ENCODE measurements at regions of chr13 and their contacts with region 1.

Region 1: DNA sequence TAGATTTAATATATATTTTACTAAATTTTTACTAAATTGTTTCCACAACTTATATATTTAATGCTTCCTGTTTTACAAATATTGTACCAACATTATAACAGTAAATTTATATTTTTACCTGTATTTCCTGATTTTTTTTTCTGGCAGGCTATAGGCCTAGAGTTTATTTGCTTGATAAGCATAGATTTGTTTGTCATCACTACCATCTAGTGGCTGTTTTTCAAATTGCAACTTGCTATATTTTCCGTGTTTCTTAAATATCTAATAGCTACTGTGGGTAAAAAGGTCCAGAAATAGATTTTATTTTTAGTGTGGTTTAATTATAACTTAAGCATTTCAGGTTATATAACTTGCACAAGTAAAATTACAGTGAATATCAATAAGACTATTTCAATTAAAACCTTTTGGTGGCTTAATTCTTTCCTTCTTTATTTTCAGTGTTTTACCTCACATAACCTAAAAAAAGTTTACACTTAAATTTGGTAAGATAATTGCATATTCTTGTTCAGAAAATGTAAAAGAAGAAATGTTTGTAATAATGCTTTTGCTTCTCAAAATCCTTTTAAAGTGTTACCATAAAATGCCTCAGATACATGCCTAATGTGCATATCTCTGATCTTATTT is 60.6 kb downstream of the NDFIP2 start:
- DNase-seq: peak in 7 of 9 donors; percentile 36 to 70 (median 59)
- ATAC-seq: peak; percentile 74
- H3K4me3 ChIP-seq: no peak overlapping the region
- H3K4me3 Mint-ChIP-seq: no peak overlapping the region
- H3K27ac ChIP-seq: no peak overlapping the region
- H3K27ac Mint-ChIP-seq: no peak overlapping the region
- H3K4me1 ChIP-seq: no peaks in the 10 kb centered on the region
- H3K4me1 Mint-ChIP-seq: peaks cover 0 to 20% (median 0%) of the 10 kb centered on the region in 7 donors
- H3K27me3 ChIP-seq: no peaks in the 10 kb centered on the region
- H3K27me3 Mint-ChIP-seq: no peaks in the 10 kb centered on the region

Region 2: DNA sequence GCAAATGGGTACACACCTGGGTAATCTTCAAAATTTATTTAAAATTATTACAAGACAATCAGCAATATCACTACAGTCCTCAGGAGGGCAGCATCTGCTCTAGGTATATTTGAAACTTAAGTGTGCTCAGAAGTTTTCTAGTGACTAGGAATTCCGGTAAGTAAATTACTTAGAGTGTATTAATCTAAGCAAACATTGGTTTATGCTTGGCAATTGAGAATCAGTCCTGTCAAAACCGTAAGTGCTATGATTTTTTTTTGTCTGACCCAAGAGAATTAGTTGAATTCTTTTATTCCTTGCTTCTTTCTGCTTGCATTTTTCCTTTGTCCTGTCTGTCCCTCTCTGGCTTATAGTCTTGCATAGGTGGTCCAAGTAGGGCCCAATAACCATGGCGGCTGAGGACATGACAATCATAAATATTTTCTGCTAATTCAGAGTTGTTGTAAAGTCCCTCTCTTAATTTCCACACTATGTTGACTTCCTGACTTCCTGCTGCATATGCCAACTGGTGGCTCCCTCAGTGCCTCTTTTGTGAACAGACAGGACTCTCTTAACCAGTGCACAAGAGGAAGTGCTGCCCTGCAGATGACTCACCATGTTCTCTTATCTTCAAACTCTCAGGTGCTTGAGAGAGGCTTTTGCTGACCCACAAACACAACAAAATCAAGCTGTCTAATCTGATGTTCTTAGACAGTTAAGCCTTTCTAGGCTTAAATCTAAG is 1761.8 kb before region 1 on chr13:
- CTCF ChIA-PET with region 1: no interaction called
- POLR2A ChIA-PET with region 1: no interaction called
- intact Hi-C with region 1: loop called in 1 of 2 experiments (anchors 5 kb)
- DNase-seq: peak in 5 of 9 donors; percentile 23 to 41 (median 25)
- ATAC-seq: peak; percentile 81
- H3K4me3 ChIP-seq: no peak overlapping the region
- H3K4me3 Mint-ChIP-seq: no peak overlapping the region
- H3K27ac ChIP-seq: no peak overlapping the region
- H3K27ac Mint-ChIP-seq: peak overlapping the region in 1 of 9 donors; percentile 16
- H3K4me1 ChIP-seq: no peaks in the 10 kb centered on the region
- H3K4me1 Mint-ChIP-seq: peaks cover 4 to 12% (median 8%) of the 10 kb centered on the region in 7 donors
- H3K27me3 ChIP-seq: no peaks in the 10 kb centered on the region
- H3K27me3 Mint-ChIP-seq: peaks cover 0 to 8% (median 2%) of the 10 kb centered on the region in 5 donors

Region 3: DNA sequence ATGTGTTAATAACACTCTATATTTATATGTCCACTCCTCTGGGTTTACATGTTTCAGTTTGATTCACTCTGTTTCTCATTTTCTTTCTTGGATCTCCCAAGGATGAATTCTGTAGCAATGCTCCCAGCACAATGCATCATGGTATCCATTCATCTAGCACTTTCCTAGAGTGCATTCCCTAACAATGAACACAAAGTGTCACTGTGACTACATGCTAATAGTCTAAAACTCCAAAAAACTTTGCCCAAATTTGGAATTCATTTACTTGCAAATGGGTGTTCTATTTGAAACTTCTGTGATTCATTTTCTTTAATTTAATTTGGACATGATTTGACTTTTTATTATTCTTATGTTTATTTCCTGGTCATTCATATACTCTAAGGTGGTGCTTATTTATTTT is 1224.5 kb before region 1 on chr13:
- CTCF ChIA-PET with region 1: no interaction called
- POLR2A ChIA-PET with region 1: no interaction called
- intact Hi-C with region 1: loop called in 1 of 2 experiments (anchors 10 kb)
- DNase-seq: no peak
- ATAC-seq: no peak
- H3K4me3 ChIP-seq: no peak overlapping the region
- H3K4me3 Mint-ChIP-seq: no peak overlapping the region
- H3K27ac ChIP-seq: no peak overlapping the region
- H3K27ac Mint-ChIP-seq: no peak overlapping the region
- H3K4me1 ChIP-seq: no peaks in the 10 kb centered on the region
- H3K4me1 Mint-ChIP-seq: no peaks in the 10 kb centered on the region
- H3K27me3 ChIP-seq: no peaks in the 10 kb centered on the region
- H3K27me3 Mint-ChIP-seq: peaks cover 0 to 4% (median 2%) of the 10 kb centered on the region in 5 donors

Region 4: DNA sequence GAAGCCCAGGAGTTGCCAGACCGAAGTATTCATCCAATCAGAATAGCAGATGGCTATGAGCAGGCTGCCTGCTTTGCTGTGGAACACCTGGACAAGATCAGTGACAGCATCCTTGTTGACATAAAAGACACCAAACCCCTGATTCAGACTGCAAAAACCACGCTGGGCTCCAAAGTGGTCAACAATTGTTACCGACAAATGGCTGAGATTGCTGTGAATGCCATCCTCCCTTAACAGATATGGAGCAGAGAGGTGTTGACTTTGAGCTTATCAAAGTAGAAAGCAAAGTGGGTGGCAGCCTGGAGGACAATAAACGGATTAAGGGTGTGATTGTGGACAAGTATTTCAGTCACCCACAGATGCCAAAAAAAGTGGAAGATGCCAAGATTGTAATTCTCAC is 632.3 kb before region 1 on chr13:
- CTCF ChIA-PET with region 1: no interaction called
- POLR2A ChIA-PET with region 1: no interaction called
- intact Hi-C with region 1: no loop called
- DNase-seq: no peak
- ATAC-seq: no peak
- H3K4me3 ChIP-seq: no peak overlapping the region
- H3K4me3 Mint-ChIP-seq: no peak overlapping the region
- H3K27ac ChIP-seq: no peak overlapping the region
- H3K27ac Mint-ChIP-seq: no peak overlapping the region
- H3K4me1 ChIP-seq: no peaks in the 10 kb centered on the region
- H3K4me1 Mint-ChIP-seq: no peaks in the 10 kb centered on the region
- H3K27me3 ChIP-seq: no peaks in the 10 kb centered on the region
- H3K27me3 Mint-ChIP-seq: peaks cover 0 to 13% (median 6%) of the 10 kb centered on the region in 5 donors

Region 5: GRCh38 chr13:78978381-78978998 is 563.0 kb before region 1 on chr13:
- CTCF ChIA-PET with region 1: no interaction called
- POLR2A ChIA-PET with region 1: no interaction called
- intact Hi-C with region 1: loop called in 1 of 2 experiments (anchors 2 kb)
- DNase-seq: peak in 6 of 9 donors; percentile 15 to 51 (median 40)
- ATAC-seq: peak; percentile 84
- H3K4me3 ChIP-seq: no peak overlapping the region
- H3K4me3 Mint-ChIP-seq: no peak overlapping the region
- H3K27ac ChIP-seq: no peak overlapping the region
- H3K27ac Mint-ChIP-seq: no peak overlapping the region
- H3K4me1 ChIP-seq: no peaks in the 10 kb centered on the region
- H3K4me1 Mint-ChIP-seq: no peaks in the 10 kb centered on the region
- H3K27me3 ChIP-seq: no peaks in the 10 kb centered on the region
- H3K27me3 Mint-ChIP-seq: peaks cover 9 to 37% (median 14%) of the 10 kb centered on the region in 5 donors

Region 6: GRCh38 chr13:79336966-79337365 is 204.6 kb before region 1 on chr13:
- CTCF ChIA-PET with region 1: no interaction called
- POLR2A ChIA-PET with region 1: no interaction called
- intact Hi-C with region 1: loop called in 1 of 2 experiments (anchors 10 kb)
- DNase-seq: no peak
- ATAC-seq: peak; percentile 67
- H3K4me3 ChIP-seq: no peak overlapping the region
- H3K4me3 Mint-ChIP-seq: no peak overlapping the region
- H3K27ac ChIP-seq: no peak overlapping the region
- H3K27ac Mint-ChIP-seq: peak overlapping the region in 3 of 9 donors; percentile 28 to 57 (median 37)
- H3K4me1 ChIP-seq: no peaks in the 10 kb centered on the region
- H3K4me1 Mint-ChIP-seq: peaks cover 4 to 10% (median 9%) of the 10 kb centered on the region in 7 donors
- H3K27me3 ChIP-seq: no peaks in the 10 kb centered on the region
- H3K27me3 Mint-ChIP-seq: no peaks in the 10 kb centered on the region

Region 7: GRCh38 chr13:79423801-79424642 is 117.5 kb before region 1 on chr13:
- CTCF ChIA-PET with region 1: interaction called, 136 read pairs
- POLR2A ChIA-PET with region 1: interaction called, 4 read pairs
- intact Hi-C with region 1: loop called (anchors 1 kb)
- DNase-seq: peak in 5 of 9 donors; percentile 33 to 53 (median 37)
- ATAC-seq: peak; percentile 76
- H3K4me3 ChIP-seq: no peak overlapping the region
- H3K4me3 Mint-ChIP-seq: no peak overlapping the region
- H3K27ac ChIP-seq: no peak overlapping the region
- H3K27ac Mint-ChIP-seq: no peak overlapping the region
- H3K4me1 ChIP-seq: no peaks in the 10 kb centered on the region
- H3K4me1 Mint-ChIP-seq: peaks cover 0 to 16% (median 0%) of the 10 kb centered on the region in 7 donors
- H3K27me3 ChIP-seq: no peaks in the 10 kb centered on the region
- H3K27me3 Mint-ChIP-seq: no peaks in the 10 kb centered on the region

Region 8: DNA sequence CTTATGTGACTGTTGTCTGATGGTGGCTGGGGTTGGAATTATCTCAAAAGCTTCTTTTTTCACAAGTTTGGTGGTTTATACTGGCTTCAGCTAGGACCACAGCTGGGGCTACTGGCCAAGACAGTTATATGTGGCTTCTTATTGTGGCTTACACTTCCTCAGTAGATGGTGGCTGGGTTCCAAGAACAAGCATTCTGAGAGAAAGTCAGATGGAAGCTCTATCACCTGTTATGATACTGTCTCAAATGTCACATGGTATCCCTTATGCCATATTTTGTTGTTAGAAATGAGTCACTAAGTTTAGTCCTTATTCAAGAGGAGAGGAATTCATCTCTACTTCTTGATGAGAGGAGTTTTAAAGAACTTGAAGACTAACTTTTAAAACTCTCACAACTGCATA is 19.0 kb before region 1 on chr13:
- CTCF ChIA-PET with region 1: interaction called, 3 read pairs
- POLR2A ChIA-PET with region 1: no interaction called
- intact Hi-C with region 1: loop called in 1 of 2 experiments (anchors 2 kb)
- DNase-seq: peak in 1 of 9 donors; percentile 40
- ATAC-seq: peak; percentile 74
- H3K4me3 ChIP-seq: no peak overlapping the region
- H3K4me3 Mint-ChIP-seq: peak overlapping the region in 1 of 10 donors; percentile 84
- H3K27ac ChIP-seq: no peak overlapping the region
- H3K27ac Mint-ChIP-seq: peak overlapping the region in 1 of 9 donors; percentile 91
- H3K4me1 ChIP-seq: peaks cover 0 to 7% of the 10 kb centered on the region in 2 donors
- H3K4me1 Mint-ChIP-seq: peaks cover 0 to 41% (median 13%) of the 10 kb centered on the region in 7 donors
- H3K27me3 ChIP-seq: no peaks in the 10 kb centered on the region
- H3K27me3 Mint-ChIP-seq: no peaks in the 10 kb centered on the region

Measured in naive thymus-derived CD4-positive, alpha-beta T cell (primary cell).